Endothelial cell of umbilical vein (primary cell): ENCODE measurements at regions of chr19 and their contacts with region 1.

Region 1: GRCh38 chr19:47348819-47349795 is at the start of gene DHX34:
- DNase-seq: peak; percentile 100
- H3K4me3 ChIP-seq: peak within 1 kb of the TSS; percentile 44 to 55 (median 53)
- H3K27ac ChIP-seq: no peak within 1 kb of the TSS
- H3K4me1 ChIP-seq: peaks cover 6% of the 10 kb centered on the region
- H3K27me3 ChIP-seq: no peaks in the 10 kb centered on the region
- CTCF ChIP-seq: peak; percentile 99 to 100
- POLR2A ChIP-seq: peak; percentile 79
- total RNA-seq, gene DHX34: 15.8 and 20.7 TPM in 2 replicates

Region 2: GRCh38 chr19:47296036-47296435 is 53.1 kb before region 1 on chr19:
- CTCF ChIA-PET with region 1: interaction called, 11 read pairs
- POLR2A ChIA-PET with region 1: interaction called, 4 read pairs
- dilution Hi-C with region 1: no loop called
- intact Hi-C with region 1: no loop called
- DNase-seq: peak; percentile 55
- H3K4me3 ChIP-seq: no peak overlapping the region
- H3K27ac ChIP-seq: no peak overlapping the region
- H3K4me1 ChIP-seq: no peaks in the 10 kb centered on the region
- H3K27me3 ChIP-seq: no peaks in the 10 kb centered on the region
- CTCF ChIP-seq: peak; percentile 62 to 70
- POLR2A ChIP-seq: no peak

Region 3: GRCh38 chr19:47336853-47337279 is 12.2 kb before region 1 on chr19:
- CTCF ChIA-PET with region 1: interaction called, 11 read pairs
- POLR2A ChIA-PET with region 1: no interaction called
- dilution Hi-C with region 1: no loop called
- intact Hi-C with region 1: no loop called
- DNase-seq: no peak
- H3K4me3 ChIP-seq: no peak overlapping the region
- H3K27ac ChIP-seq: no peak overlapping the region
- H3K4me1 ChIP-seq: no peaks in the 10 kb centered on the region
- H3K27me3 ChIP-seq: no peaks in the 10 kb centered on the region
- CTCF ChIP-seq: no peak
- POLR2A ChIP-seq: no peak

Region 4: GRCh38 chr19:47391510-47392223 is 42.6 kb after region 1 on chr19:
- CTCF ChIA-PET with region 1: interaction called, 25 read pairs
- POLR2A ChIA-PET with region 1: no interaction called
- dilution Hi-C with region 1: no loop called
- intact Hi-C with region 1: no loop called
- DNase-seq: peak; percentile 60
- H3K4me3 ChIP-seq: no peak overlapping the region
- H3K27ac ChIP-seq: no peak overlapping the region
- H3K4me1 ChIP-seq: no peaks in the 10 kb centered on the region
- H3K27me3 ChIP-seq: no peaks in the 10 kb centered on the region
- CTCF ChIP-seq: peak; percentile 77 to 90
- POLR2A ChIP-seq: no peak